Dendritic cell treated with granulocyte-macrophage colony-stimulating factor and Interleukin-4, amounts not matched to agents 40 ng/mL and 50 ng/mL, for 4 days (primary cell): ENCODE measurements at regions of chr2 and their contacts with region 1.

Region 1: DNA sequence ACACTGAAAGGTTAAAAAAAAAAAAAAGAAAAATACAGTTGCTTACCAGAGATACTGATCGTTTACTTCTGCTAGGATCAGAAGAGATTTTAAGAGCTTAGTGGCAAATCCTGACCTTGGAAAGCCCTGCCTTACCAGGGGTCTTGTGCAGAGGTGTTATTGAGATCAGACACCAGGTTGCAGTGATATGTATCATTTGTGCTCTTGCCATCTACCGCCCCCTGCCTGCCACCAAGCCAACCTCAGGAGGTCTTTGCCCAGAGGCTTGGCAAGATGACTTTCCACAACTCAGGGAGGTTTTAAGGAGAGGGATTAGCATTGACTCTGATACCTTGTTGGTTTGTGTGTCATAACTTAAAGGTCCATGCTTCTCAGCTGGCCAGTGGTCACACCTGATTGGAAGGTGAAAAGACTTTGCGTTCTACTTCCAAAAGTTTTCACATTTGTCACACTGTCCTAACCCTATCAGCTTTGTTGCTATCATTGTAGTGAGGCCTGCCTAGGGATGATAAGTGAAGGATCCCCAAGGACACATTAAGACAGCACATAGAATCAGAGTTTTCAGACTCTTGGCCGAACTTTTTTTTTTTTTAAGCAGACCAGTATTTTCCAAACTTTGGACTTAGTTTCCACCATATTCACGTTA is 46.2 kb upstream of the MGAT5 start:
- H3K4me3 Mint-ChIP-seq: no peak overlapping the region
- H3K27ac Mint-ChIP-seq: no peak overlapping the region
- H3K4me1 Mint-ChIP-seq: peaks cover 6% of the 10 kb centered on the region
- H3K27me3 Mint-ChIP-seq: no peaks in the 10 kb centered on the region

Region 2: DNA sequence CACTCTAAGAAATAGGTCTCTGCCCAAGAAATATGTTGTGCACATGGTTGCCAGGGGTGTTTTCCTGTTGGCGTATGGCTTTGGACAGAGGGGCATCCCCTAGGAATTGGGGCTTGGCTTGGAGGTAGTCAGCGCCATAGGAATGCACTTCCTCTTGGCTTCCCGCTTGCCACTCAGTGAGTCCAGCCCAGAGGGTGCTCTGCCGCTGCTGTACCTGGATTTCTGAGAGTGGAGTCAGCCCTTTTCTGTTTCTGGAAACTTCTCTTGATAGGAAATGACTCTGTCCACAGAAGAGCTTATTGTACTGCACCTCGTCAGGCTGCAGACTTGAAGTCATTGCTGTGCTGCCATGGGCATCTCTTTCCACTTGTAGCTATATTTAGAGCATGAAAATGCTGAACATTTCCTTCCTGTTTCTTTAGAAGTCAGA is 70.5 kb before region 1 on chr2:
- intact Hi-C with region 1: loop called (anchors 5 kb)
- H3K4me3 Mint-ChIP-seq: peak overlapping the region; percentile 80
- H3K27ac Mint-ChIP-seq: peak overlapping the region; percentile 90
- H3K4me1 Mint-ChIP-seq: peaks cover 90% of the 10 kb centered on the region
- H3K27me3 Mint-ChIP-seq: no peaks in the 10 kb centered on the region